ENCODE measurements at regions of chr2 and their contacts with region 1.

Region 1: DNA sequence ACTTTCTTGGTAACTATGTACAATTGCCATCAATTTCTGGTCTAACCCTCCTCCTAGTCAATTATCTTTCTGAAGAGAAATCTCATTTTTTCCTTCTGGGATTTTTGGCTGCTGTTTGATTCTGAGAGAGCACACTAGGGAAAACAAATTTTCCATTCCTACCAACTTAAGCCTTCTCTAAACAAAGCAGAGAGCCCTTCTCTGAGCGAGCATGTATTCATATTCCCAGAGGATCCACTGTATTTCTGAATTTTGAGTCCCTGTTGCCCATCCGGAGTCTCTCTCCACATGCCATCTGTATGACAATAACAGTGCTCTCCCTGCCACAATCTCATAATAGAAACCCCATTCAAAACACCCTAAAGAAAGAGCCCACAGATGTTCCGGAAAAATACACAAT is 78.5 kb downstream of the MAIP1 start:
- DNase-seq: no peak
- H3K4me3 ChIP-seq: no peak overlapping the region
- H3K27ac ChIP-seq: no peak overlapping the region
- H3K4me1 ChIP-seq: no peaks in the 10 kb centered on the region
- CTCF ChIP-seq: no peak

Region 2: DNA sequence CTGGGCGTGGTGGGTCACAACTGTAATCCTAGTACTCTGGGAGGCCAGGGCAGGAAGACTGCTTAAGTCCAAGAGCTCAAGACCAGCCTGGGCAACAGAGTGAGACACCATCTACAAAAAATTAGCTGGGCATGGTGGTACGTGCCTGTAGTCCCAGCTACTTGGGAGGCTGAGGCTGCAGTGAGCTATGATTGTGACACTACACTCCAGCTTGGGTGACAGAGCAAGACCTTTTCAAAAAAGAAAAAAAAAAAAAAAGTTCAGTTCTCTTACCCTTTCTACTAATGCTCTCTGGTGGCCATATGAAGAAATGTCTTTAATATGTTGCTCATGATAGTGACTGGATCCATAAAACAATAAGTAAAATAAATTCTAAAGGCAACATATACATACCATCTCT is 93.6 kb before region 1 on chr2:
- CTCF ChIA-PET with region 1: no interaction called
- POLR2A ChIA-PET with region 1: no interaction called
- intact Hi-C with region 1: no loop called
- DNase-seq: peak; percentile 53
- H3K4me3 ChIP-seq: no peak overlapping the region
- H3K27ac ChIP-seq: no peak overlapping the region
- H3K4me1 ChIP-seq: no peaks in the 10 kb centered on the region
- CTCF ChIP-seq: peak; percentile 74

Region 3: GRCh38 chr2:200297989-200298388 is 264.1 kb after region 1 on chr2:
- CTCF ChIA-PET with region 1: no interaction called
- POLR2A ChIA-PET with region 1: no interaction called
- intact Hi-C with region 1: loop called (anchors 5 kb)
- DNase-seq: no peak
- H3K4me3 ChIP-seq: no peak overlapping the region
- H3K27ac ChIP-seq: no peak overlapping the region
- H3K4me1 ChIP-seq: no peaks in the 10 kb centered on the region
- CTCF ChIP-seq: no peak